ENCODE measurements at regions of chr11 and their contacts with region 1.

Region 1: DNA sequence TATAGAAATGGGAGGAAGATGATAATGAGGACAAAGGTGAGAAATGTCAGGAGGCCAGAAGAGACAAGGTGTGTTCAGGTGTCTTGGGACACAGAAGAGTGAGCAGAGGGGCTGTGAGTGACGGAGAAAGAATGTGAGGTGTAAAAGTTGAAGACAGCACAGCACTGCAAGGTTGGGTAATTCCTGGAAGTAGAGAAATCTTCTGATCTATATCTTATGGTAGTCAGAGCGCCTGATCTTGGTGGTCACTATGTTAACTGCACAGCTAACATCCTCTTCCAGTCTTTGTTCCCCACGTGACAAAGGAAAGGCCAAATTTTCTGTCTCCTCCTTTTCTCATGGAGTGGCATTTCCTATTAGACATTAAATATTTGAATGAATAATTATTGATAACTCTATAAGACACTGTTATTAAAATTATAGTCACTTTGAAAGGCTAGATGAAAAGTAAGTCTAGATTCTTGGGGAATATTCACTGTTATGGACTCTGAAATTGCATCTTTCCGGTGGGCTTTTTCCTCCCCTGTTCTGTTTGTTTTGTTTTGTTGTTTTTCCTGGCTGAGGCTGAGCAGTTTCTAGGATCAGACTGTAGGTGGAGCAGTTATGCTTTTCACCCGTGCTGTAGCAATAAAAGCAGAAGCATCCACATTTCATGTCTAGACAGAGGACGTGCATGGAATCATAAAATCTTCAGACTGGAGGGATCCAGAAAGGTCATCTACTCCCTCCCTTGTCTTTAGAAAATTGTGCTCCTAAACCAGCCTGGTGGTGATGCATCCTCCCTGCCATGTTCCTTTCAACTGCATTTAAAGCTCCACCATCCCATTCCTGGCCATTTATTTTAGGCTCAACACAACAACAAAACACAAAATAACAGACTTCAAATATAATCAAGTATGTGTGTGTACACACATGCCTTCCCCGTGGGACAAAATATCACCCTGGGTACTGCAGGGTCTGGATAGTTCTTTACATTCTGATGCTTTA is 26.6 kb downstream of the SC5D start:
- DNase-seq: peak; percentile 31
- ATAC-seq: peak; percentile 68
- H3K4me3 Mint-ChIP-seq: no peak overlapping the region
- H3K27ac Mint-ChIP-seq: no peak overlapping the region
- H3K4me1 Mint-ChIP-seq: peaks cover 20% of the 10 kb centered on the region
- H3K27me3 Mint-ChIP-seq: no peaks in the 10 kb centered on the region
- CTCF ChIP-seq: peak; percentile 77

Region 2: GRCh38 chr11:121451986-121452608 is 133.0 kb after region 1 on chr11 and contains the start of gene SORL1:
- CTCF ChIA-PET with region 1: no interaction called
- POLR2A ChIA-PET with region 1: no interaction called
- intact Hi-C with region 1: loop called (anchors 10 kb)
- DNase-seq: peak; percentile 84
- ATAC-seq: peak; percentile 66
- H3K4me3 Mint-ChIP-seq: peak within 1 kb of the TSS; percentile 95
- H3K27ac Mint-ChIP-seq: peak within 1 kb of the TSS; percentile 98
- H3K4me1 Mint-ChIP-seq: peaks cover 77% of the 10 kb centered on the region
- H3K27me3 Mint-ChIP-seq: no peaks in the 10 kb centered on the region
- CTCF ChIP-seq: peak; percentile 43
- total RNA-seq, gene SORL1: 61.1 to 64.6 TPM

Region 3: GRCh38 chr11:121578251-121578976 is 259.3 kb after region 1 on chr11:
- CTCF ChIA-PET with region 1: no interaction called
- POLR2A ChIA-PET with region 1: no interaction called
- intact Hi-C with region 1: no loop called
- DNase-seq: no peak
- ATAC-seq: no peak
- H3K4me3 Mint-ChIP-seq: no peak overlapping the region
- H3K27ac Mint-ChIP-seq: no peak overlapping the region
- H3K4me1 Mint-ChIP-seq: peaks cover 27% of the 10 kb centered on the region
- H3K27me3 Mint-ChIP-seq: no peaks in the 10 kb centered on the region
- CTCF ChIP-seq: no peak